Activated T-helper 1 cell treated with anti-CD3 and anti-CD28 coated beads, Interleukin-12 subunit alpha, Interleukin-12 subunit beta, Interleukin-2, Interleukin-4 antibody, amounts not matched to agents 30 ng/mL and 10 ng/mL and 1 ng/mL, durations not matched to agents 14 hours and 24 hours and 36 hours (primary cell): ENCODE measurements at regions of chr6 and their contacts with region 1.

Region 1: GRCh38 chr6:36874443-36875249 is at the start of gene PPIL1:
- DNase-seq: peak; percentile 75
- H3K4me3 Mint-ChIP-seq: peak within 1 kb of the TSS; percentile 93
- H3K27ac Mint-ChIP-seq: peak within 1 kb of the TSS; percentile 99
- H3K4me1 Mint-ChIP-seq: peaks cover 47% of the 10 kb centered on the region
- H3K27me3 Mint-ChIP-seq: peaks cover 2% of the 10 kb centered on the region
- total RNA-seq, gene PPIL1: 60.2 and 62.6 TPM in 2 replicates

Region 2: GRCh38 chr6:36697481-36697903 is 177.2 kb before region 1 on chr6 and contains the start of gene RAB44:
- intact Hi-C with region 1: loop called (anchors 5 kb)
- DNase-seq: no peak
- H3K4me3 Mint-ChIP-seq: no peak within 1 kb of the TSS
- H3K27ac Mint-ChIP-seq: peak within 1 kb of the TSS; percentile 63
- H3K4me1 Mint-ChIP-seq: peaks cover 52% of the 10 kb centered on the region
- H3K27me3 Mint-ChIP-seq: no peaks in the 10 kb centered on the region
- total RNA-seq, gene RAB44: 0.05 and 0.10 TPM in 2 replicates

Region 3: GRCh38 chr6:36885461-36886401 is 11.1 kb after region 1 on chr6 and contains the start of gene C6orf89:
- intact Hi-C with region 1: loop called (anchors 1 kb)
- DNase-seq: peak; percentile 94
- H3K4me3 Mint-ChIP-seq: peak within 1 kb of the TSS; percentile 91
- H3K27ac Mint-ChIP-seq: peak within 1 kb of the TSS; percentile 82
- H3K4me1 Mint-ChIP-seq: peaks cover 37% of the 10 kb centered on the region
- H3K27me3 Mint-ChIP-seq: no peaks in the 10 kb centered on the region
- total RNA-seq, gene C6orf89: 31.5 and 31.8 TPM in 2 replicates

Region 4: GRCh38 chr6:36929607-36930006 is 55.0 kb after region 1 on chr6:
- intact Hi-C with region 1: no loop called
- DNase-seq: no peak
- H3K4me3 Mint-ChIP-seq: no peak overlapping the region
- H3K27ac Mint-ChIP-seq: no peak overlapping the region
- H3K4me1 Mint-ChIP-seq: peaks cover 21% of the 10 kb centered on the region
- H3K27me3 Mint-ChIP-seq: peaks cover 3% of the 10 kb centered on the region